ENCODE measurements at regions of chr1 and their contacts with region 1.

Region 1: DNA sequence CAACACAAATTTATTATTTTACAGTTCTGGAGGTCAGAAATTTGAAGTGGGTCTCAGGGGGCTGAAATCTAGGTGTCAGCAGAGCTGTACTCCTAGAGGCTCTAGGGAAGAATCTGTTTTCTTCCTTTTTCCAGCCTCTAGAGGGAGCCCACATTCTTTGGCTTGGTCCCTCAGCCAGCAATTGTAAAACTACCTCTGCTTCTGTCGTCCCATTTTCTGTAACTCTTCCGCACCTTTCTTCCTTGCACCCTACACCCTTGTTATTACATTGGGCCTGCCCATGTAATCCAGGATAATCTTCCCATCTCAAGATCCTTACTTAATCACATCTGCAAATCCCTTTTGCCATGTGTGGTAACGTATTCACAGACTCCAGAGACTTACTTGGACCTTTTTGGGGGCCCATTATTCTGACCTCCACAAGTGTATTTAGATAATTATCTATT is 24.8 kb upstream of the THEM4 start:
- DNase-seq: peak; percentile 58
- H3K4me3 Mint-ChIP-seq: no peak overlapping the region
- H3K27ac Mint-ChIP-seq: no peak overlapping the region
- H3K4me1 Mint-ChIP-seq: peaks cover 2% of the 10 kb centered on the region
- H3K27me3 Mint-ChIP-seq: no peaks in the 10 kb centered on the region

Region 2: GRCh38 chr1:150674881-150675280 is 1259.2 kb before region 1 on chr1:
- CTCF ChIA-PET with region 1: no interaction called
- POLR2A ChIA-PET with region 1: no interaction called
- intact Hi-C with region 1: no loop called
- DNase-seq: no peak
- H3K4me3 Mint-ChIP-seq: no peak overlapping the region
- H3K27ac Mint-ChIP-seq: no peak overlapping the region
- H3K4me1 Mint-ChIP-seq: peaks cover 5% of the 10 kb centered on the region
- H3K27me3 Mint-ChIP-seq: no peaks in the 10 kb centered on the region

Region 3: GRCh38 chr1:151888972-151889570 is 45.0 kb before region 1 on chr1:
- CTCF ChIA-PET with region 1: interaction called, 3 read pairs
- POLR2A ChIA-PET with region 1: no interaction called
- intact Hi-C with region 1: loop called (anchors 2 kb)
- DNase-seq: no peak
- H3K4me3 Mint-ChIP-seq: no peak overlapping the region
- H3K27ac Mint-ChIP-seq: no peak overlapping the region
- H3K4me1 Mint-ChIP-seq: peaks cover 27% of the 10 kb centered on the region
- H3K27me3 Mint-ChIP-seq: no peaks in the 10 kb centered on the region

Region 4: GRCh38 chr1:151968058-151968457 is 34.0 kb after region 1 on chr1:
- CTCF ChIA-PET with region 1: interaction called, 95 read pairs
- POLR2A ChIA-PET with region 1: interaction called, 3 read pairs
- intact Hi-C with region 1: loop called (anchors 5 kb)
- DNase-seq: peak; percentile 55
- H3K4me3 Mint-ChIP-seq: no peak overlapping the region
- H3K27ac Mint-ChIP-seq: no peak overlapping the region
- H3K4me1 Mint-ChIP-seq: peaks cover 19% of the 10 kb centered on the region
- H3K27me3 Mint-ChIP-seq: no peaks in the 10 kb centered on the region

Region 5: DNA sequence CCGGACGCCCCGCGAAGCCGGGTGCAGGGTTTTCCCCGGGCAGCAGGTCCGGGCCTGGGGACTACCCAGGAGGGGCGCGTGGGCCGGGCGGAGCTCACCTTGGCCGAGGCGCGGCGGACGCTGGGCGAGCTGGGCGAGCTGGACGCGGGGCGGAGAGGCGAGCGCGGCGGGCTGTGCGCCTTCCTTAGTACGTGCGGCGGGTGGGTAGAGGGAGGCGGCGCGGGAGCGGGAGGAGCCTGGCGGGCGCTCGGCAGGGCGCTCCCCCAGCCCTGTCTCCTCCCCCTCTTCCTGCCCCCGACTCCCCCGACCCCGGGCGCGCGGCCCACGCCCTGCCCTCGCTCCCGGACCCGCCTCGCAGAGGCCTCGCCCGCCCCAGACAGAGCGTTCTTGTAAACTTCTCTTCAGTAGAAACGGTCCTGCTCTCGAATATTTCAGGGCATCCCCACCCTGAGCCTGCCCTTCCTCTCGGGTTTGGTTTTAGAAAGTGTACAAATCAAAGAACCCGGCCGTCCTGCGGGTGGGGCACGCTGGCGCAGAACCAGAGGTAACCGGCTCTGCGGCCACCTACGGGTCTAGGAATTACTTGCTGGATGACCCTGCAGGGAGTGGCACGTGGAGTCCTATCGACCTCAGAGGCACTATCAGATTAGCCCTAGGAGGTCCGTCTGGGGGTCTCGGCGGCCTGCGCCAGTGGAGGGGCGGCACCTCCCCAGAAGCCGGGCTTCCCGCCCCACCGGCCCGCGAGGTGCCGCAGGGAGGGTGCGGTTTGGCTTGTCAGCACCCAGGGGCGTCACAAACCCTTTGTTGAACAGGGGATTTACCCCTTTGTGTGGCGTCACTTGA is 59.8 kb after region 1 on chr1 and contains the start of gene S100A10:
- CTCF ChIA-PET with region 1: interaction called, 377 read pairs
- POLR2A ChIA-PET with region 1: no interaction called
- intact Hi-C with region 1: loop called (anchors 1 kb)
- DNase-seq: peak; percentile 83
- H3K4me3 Mint-ChIP-seq: peak within 1 kb of the TSS; percentile 94
- H3K27ac Mint-ChIP-seq: peak within 1 kb of the TSS; percentile 90
- H3K4me1 Mint-ChIP-seq: peaks cover 47% of the 10 kb centered on the region
- H3K27me3 Mint-ChIP-seq: no peaks in the 10 kb centered on the region
- total RNA-seq, gene S100A10: 257 to 270 TPM

Region 6: DNA sequence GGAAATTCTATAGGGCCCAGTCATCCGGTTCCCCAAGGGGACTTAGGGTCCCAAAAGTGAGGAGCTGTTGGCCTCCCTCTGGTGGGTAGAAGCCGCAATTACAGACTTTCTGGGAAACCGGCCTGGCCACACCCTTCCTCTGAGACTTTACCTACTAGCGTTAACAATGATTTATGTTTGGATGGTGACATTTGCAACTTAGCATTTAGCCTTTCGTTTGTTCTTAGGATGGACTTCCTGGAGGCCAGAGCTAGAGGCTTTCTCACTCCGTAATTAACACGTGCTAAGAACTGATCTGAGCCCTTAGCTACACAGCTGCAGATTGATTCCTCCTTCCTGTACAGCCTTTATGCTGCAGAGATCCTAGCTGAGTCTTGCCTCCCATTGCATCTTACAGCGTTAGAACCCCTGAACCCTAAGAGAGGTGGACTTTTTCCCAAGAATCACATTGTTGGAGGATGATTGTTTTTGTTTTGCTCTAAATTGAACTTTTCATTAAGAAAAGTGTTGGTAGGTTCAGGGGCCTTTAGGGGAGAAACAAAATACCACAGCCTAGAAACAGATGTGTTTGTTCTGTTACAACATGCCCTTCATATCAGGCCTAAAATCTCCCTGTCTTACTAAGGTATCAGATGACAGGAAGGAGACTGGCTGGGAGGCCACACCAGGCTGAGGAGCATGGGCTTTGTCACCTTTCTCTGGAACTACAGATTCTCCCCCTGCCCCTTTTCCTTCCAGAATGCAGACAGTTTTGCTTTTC is 100.8 kb after region 1 on chr1:
- CTCF ChIA-PET with region 1: interaction called, 30 read pairs
- POLR2A ChIA-PET with region 1: no interaction called
- intact Hi-C with region 1: no loop called
- DNase-seq: peak; percentile 83
- H3K4me3 Mint-ChIP-seq: peak overlapping the region; percentile 83
- H3K27ac Mint-ChIP-seq: peak overlapping the region; percentile 100
- H3K4me1 Mint-ChIP-seq: peaks cover 43% of the 10 kb centered on the region
- H3K27me3 Mint-ChIP-seq: no peaks in the 10 kb centered on the region